Caki2 (cell line): ENCODE measurements at regions of chr5 and their contacts with region 1.

Region 1: GRCh38 chr5:139517683-139518564 is 35.4 kb upstream of the STING1 start:
- DNase-seq: peak; percentile 85

Region 2: GRCh38 chr5:139043157-139043905 is 474.6 kb before region 1 on chr5:
- in situ Hi-C with region 1: no loop called
- DNase-seq: no peak

Region 3: DNA sequence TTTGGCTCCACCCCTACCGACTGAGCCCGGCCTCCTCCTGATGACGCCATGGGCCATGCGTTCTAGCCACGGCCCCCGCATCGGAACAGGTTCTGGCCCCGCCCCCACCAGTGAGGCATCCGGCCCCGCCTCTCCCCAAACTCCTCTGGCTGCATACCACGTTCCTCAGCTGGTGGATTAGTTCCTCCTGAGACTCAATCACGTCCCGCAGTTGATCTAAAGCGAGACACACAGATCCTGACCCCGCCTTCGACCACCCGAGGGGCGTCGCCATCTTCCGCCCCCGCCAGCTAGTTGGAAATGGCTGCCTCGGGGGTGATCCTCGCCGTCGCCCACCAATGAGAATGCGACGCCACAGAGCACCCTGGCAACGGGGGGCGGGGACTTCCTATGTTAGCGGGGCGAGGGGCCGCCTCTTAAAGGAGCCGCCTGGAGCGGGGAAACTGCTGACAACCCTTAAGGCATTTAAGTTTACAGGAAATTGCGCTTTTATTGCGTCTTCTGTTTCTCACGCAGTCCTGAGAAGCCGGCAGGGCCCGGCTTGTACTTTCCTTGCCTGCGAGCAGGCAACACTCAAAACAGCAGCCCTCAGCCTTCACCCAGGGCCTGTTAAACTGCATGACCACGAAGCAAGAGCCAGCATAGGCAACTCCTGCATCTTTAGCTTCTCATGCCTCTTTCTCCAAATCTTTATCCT is 114.0 kb before region 1 on chr5 and contains the start of gene SPATA24:
- in situ Hi-C with region 1: loop called (anchors 25 kb)
- DNase-seq: peak; percentile 97
- total RNA-seq, gene SPATA24: 2.5 and 12.8 TPM in 2 replicates